SK-N-SH (cell line): ENCODE measurements at regions of chr17 and their contacts with region 1.

Region 1: DNA sequence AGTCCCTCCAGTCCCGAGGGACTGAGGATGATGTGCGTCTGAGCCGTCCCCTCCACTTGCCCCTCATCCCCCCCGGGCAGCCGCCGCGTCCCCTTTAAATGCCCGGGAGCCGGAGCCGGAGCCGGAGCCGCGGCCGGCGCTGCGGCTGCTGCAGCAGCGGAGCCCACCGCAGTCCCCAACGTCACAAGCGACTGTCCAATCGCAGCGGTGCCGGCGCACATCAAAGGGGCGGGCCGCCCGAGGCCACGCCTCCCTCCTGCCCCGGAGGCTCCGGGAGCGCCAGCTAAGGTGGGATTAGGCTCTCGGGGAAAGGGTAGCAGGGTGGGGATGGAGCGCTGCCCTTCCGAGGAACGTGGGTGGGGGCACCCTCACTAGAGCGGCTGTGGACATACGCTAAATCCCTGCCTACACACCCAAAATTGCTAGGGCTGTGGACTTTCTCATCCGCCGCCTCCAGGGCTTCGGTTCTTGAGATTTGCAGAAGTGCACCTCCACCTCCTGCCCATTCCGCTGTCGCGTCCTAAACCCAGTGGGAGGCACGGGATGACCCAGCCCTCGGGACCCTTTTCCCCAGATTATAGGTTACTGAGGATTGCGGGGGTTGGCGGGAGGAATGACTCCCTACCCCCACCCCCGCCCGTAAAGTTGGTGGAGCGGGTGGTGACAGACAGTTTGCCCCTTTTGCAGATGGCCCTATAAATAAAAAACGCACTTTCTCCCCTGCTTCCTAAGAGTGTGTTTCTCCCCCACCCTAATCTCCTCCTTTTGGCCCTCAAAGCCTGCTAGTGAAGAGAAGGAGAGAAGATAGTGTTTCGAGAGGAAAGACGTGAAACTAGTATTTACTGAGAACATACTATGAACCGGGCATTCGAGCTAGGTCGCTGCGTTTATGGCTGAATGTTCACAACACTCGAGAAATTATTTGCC is at the start of gene PHOSPHO1:
- DNase-seq: peak; percentile 99
- H3K4me3 ChIP-seq: peak within 1 kb of the TSS; percentile 61 to 73
- H3K27ac ChIP-seq: no peak within 1 kb of the TSS
- H3K4me1 ChIP-seq: peaks cover 0 to 9% of the 10 kb centered on the region in 2 experiments; a peak in 1 of 4 replicates
- H3K27me3 ChIP-seq: peaks cover 53% of the 10 kb centered on the region
- CTCF ChIP-seq: no peak
- EP300 ChIP-seq: no peak
- RAD21 ChIP-seq: no peak
- polyA plus RNA-seq, gene PHOSPHO1: 0.13 TPM in 1 of 2 replicates, not detected in the other

Region 2: DNA sequence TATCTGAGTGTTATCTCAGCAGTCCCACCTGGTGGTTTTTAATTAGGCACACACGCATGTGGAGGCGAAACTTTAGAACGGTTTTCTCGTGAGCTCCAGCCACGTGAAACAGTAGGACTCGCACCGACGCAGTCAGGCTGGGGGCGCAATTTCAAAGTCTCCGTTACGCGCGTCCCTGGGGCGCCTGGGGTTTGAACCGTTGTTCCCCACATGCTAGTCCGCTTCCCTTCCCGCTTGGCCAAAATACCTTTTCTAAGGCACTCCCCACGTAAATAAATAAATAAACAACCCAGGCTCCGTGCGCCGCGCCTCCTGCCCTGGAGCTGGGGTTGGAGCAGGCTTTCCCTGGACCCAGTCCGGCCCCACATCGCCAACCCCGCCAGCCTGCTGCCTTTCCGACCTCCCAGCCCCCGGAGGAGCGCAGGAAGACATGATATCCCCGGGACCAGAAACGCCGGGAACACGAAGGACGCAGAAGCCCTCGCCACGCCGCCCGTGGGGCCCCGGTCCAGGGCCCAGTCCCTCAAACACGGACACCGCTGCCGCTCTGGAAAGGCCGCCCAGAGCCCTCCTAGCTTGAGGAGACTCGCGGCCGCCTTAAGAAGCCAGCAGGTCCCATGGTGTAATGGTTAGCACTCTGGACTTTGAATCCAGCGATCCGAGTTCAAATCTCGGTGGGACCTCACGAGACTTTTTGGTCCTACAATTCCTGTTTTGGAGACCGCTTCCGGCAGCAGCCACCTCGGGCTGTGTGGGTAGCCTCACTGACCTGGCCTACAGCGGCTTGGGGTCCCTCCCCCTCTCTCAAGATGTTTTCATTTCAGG is 38.8 kb before region 1 on chr17:
- CTCF ChIA-PET with region 1: interaction called, 77 read pairs
- POLR2A ChIA-PET with region 1: no interaction called
- DNase-seq: peak; percentile 88
- H3K4me3 ChIP-seq: peak overlapping the region; percentile 64 to 77
- H3K27ac ChIP-seq: peak overlapping the region; percentile 90 to 94
- H3K4me1 ChIP-seq: peaks cover 0 to 3% of the 10 kb centered on the region in 2 experiments; a peak in 2 of 4 replicates
- H3K27me3 ChIP-seq: no peaks in the 10 kb centered on the region; the same call in 1 of the 2 replicates
- CTCF ChIP-seq: peak; percentile 55
- EP300 ChIP-seq: peak in 1 of 2 experiments; percentile 40; a peak in 3 of 4 replicates
- RAD21 ChIP-seq: no peak

Region 3: GRCh38 chr17:49210158-49211029 is 20.5 kb before region 1 on chr17 and contains the starts of genes ABI3 and GNGT2:
- CTCF ChIA-PET with region 1: interaction called, 105 read pairs
- POLR2A ChIA-PET with region 1: no interaction called
- DNase-seq: peak; percentile 20
- H3K4me3 ChIP-seq: peak within 1 kb of the TSS; percentile 22 to 40
- H3K27ac ChIP-seq: no peak within 1 kb of the TSS; a peak in 1 of 4 replicates
- H3K4me1 ChIP-seq: peaks cover 0 to 20% of the 10 kb centered on the region in 2 experiments; a peak in 3 of 4 replicates
- H3K27me3 ChIP-seq: no peaks in the 10 kb centered on the region
- CTCF ChIP-seq: no peak
- EP300 ChIP-seq: no peak
- RAD21 ChIP-seq: no peak
- polyA plus RNA-seq, gene ABI3: 2.8 and 4.7 TPM in 2 replicates
- polyA plus RNA-seq, gene GNGT2: 10.4 and 11.0 TPM in 2 replicates

Region 4: DNA sequence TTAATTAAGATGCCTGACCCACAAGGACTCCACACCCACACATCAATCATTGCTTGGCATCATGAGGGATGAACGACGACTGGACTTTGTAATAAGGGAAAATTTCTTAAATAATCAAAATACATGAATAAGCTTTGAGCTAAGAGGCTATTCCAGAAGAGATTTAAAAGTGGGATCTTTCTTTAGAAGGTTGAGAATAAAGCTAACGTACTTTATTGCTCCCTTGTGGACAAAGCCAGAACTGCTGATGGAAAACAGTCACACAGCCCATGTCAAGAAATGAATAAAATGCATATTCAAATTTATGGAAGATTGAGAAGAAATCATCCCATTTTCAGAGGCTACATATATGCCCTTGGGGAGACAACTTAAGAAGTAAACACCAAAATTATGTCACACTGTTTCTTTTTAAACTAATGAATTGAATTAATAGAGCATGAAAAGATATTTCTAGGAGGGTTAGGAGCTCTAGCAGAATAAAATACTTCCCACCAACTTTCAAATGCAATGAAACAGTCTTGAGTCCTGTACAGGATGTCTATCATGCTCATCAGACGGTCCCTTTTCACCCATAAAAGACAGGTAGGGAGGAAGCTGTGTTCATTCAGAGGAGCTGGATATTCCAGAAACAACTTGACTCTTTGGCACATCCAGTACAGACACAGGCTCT is 59.9 kb after region 1 on chr17:
- CTCF ChIA-PET with region 1: interaction called, 26 read pairs
- POLR2A ChIA-PET with region 1: no interaction called
- DNase-seq: peak; percentile 50
- H3K4me3 ChIP-seq: no peak overlapping the region
- H3K27ac ChIP-seq: no peak overlapping the region
- H3K4me1 ChIP-seq: no peaks in the 10 kb centered on the region
- H3K27me3 ChIP-seq: no peaks in the 10 kb centered on the region
- CTCF ChIP-seq: peak; percentile 88
- EP300 ChIP-seq: no peak
- RAD21 ChIP-seq: peak; percentile 66

Region 5: DNA sequence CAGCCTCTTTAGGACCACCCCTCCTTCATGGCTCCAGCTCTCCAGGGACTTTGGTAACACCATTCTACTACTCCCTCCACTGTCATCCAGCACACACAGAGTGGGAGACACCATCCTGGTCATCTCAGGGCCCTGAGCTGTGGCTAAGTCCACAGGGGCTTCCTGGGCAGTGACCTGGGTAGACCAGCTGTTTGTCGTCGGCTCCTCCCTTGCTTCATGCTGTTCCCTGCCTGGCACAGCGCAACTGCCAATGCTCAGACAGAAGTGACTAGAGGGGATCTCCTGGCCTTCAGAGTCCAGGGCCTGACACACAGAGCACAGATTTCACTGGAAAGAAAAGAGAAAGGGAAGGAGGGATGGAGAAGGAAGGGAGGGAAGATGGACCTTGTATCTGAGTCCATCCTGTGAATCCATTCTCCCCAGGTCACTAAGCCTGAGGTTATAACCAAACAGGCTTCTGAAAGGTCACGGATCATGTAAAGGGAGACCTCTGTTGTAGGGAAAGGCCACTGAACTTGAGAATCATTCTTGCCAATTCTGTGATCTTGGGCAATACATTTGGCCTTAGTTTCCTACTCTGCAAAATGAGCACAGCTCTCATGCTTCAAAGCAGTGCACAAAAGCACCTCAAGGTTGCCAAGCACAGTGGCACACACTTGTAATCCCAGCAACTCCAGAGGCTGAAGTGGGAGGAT is 202.2 kb after region 1 on chr17:
- CTCF ChIA-PET with region 1: no interaction called
- POLR2A ChIA-PET with region 1: no interaction called
- DNase-seq: no peak
- H3K4me3 ChIP-seq: no peak overlapping the region
- H3K27ac ChIP-seq: no peak overlapping the region
- H3K4me1 ChIP-seq: peaks cover 0 to 20% of the 10 kb centered on the region in 2 experiments; a peak in 2 of 4 replicates
- H3K27me3 ChIP-seq: peaks cover 19% of the 10 kb centered on the region; the same call in 1 of the 2 replicates
- CTCF ChIP-seq: no peak
- EP300 ChIP-seq: no peak
- RAD21 ChIP-seq: no peak